ENCODE measurements at regions of chr3 and their contacts with region 1.

Region 1: GRCh38 chr3:48635222-48636021 is at the start of gene SLC26A6:
- DNase-seq: peak; percentile 81 to 98 (median 86)
- ATAC-seq: peak; percentile 98
- H3K4me3 ChIP-seq: peak within 1 kb of the TSS; percentile 76
- H3K4me3 Mint-ChIP-seq: peak within 1 kb of the TSS; percentile 79 to 92 (median 88)
- H3K27ac ChIP-seq: peak within 1 kb of the TSS; percentile 70
- H3K27ac Mint-ChIP-seq: peak within 1 kb of the TSS in 7 of 9 donors; percentile 12 to 84 (median 68)
- H3K4me1 ChIP-seq: peaks cover 0 to 11% of the 10 kb centered on the region in 2 donors
- H3K4me1 Mint-ChIP-seq: peaks cover 4 to 31% (median 22%) of the 10 kb centered on the region in 7 donors
- H3K27me3 ChIP-seq: no peaks in the 10 kb centered on the region
- H3K27me3 Mint-ChIP-seq: no peaks in the 10 kb centered on the region
- total RNA-seq, gene SLC26A6: 15.1 to 37.6 (median 31.2) TPM

Region 2: GRCh38 chr3:48240711-48241491 is 394.5 kb before region 1 on chr3 and contains the start of gene ZNF589:
- CTCF ChIA-PET with region 1: no interaction called
- POLR2A ChIA-PET with region 1: no interaction called
- intact Hi-C with region 1: loop called in 1 of 2 experiments (anchors 1 kb)
- DNase-seq: peak; percentile 87 to 96 (median 92)
- ATAC-seq: peak; percentile 99
- H3K4me3 ChIP-seq: peak within 1 kb of the TSS; percentile 92
- H3K4me3 Mint-ChIP-seq: peak within 1 kb of the TSS; percentile 82 to 94 (median 92)
- H3K27ac ChIP-seq: peak within 1 kb of the TSS; percentile 79
- H3K27ac Mint-ChIP-seq: peak within 1 kb of the TSS; percentile 88 to 96 (median 93)
- H3K4me1 ChIP-seq: peaks cover 7 to 14% of the 10 kb centered on the region in 2 donors
- H3K4me1 Mint-ChIP-seq: peaks cover 5 to 36% (median 25%) of the 10 kb centered on the region in 7 donors
- H3K27me3 ChIP-seq: no peaks in the 10 kb centered on the region
- H3K27me3 Mint-ChIP-seq: no peaks in the 10 kb centered on the region
- total RNA-seq, gene ZNF589: 37.7 to 64.0 (median 40.2) TPM

Region 3: DNA sequence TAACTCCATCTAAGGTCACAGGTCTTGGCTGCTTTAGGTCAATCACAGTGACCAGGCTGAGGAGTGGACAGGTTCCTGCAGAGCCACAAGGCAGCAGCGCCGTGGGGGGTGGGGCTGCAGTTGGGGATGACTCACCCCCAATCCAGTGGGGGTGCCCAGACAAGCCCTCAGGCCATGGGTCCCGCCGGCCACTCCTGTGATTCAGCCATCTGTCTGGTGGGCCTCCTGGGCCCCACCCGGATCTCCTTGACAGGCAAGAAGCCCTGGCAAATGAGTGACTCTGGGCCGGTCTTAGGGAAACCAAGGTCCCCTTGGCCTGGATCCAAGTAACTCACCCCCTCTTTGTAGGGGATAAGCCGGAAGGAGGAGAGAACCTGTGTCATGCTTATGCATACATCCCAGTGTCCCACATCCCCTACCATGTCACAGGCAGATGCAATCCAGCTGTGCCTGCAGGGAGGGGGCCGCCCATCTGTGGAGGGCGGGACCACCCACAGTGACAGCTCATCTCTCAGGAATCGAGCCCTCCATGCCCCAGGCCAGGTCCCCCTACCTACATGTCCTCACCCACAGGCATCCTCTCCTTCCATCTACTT is 39.8 kb before region 1 on chr3:
- CTCF ChIA-PET with region 1: no interaction called
- POLR2A ChIA-PET with region 1: no interaction called
- intact Hi-C with region 1: loop called in 1 of 2 experiments (anchors 5 kb)
- DNase-seq: no peak
- ATAC-seq: peak; percentile 21
- H3K4me3 ChIP-seq: no peak overlapping the region
- H3K4me3 Mint-ChIP-seq: no peak overlapping the region
- H3K27ac ChIP-seq: no peak overlapping the region
- H3K27ac Mint-ChIP-seq: no peak overlapping the region
- H3K4me1 ChIP-seq: no peaks in the 10 kb centered on the region
- H3K4me1 Mint-ChIP-seq: peaks cover 0 to 8% (median 3%) of the 10 kb centered on the region in 7 donors
- H3K27me3 ChIP-seq: peaks cover 0 to 7% of the 10 kb centered on the region in 2 donors
- H3K27me3 Mint-ChIP-seq: peaks cover 6 to 28% (median 16%) of the 10 kb centered on the region in 5 donors

Region 4: DNA sequence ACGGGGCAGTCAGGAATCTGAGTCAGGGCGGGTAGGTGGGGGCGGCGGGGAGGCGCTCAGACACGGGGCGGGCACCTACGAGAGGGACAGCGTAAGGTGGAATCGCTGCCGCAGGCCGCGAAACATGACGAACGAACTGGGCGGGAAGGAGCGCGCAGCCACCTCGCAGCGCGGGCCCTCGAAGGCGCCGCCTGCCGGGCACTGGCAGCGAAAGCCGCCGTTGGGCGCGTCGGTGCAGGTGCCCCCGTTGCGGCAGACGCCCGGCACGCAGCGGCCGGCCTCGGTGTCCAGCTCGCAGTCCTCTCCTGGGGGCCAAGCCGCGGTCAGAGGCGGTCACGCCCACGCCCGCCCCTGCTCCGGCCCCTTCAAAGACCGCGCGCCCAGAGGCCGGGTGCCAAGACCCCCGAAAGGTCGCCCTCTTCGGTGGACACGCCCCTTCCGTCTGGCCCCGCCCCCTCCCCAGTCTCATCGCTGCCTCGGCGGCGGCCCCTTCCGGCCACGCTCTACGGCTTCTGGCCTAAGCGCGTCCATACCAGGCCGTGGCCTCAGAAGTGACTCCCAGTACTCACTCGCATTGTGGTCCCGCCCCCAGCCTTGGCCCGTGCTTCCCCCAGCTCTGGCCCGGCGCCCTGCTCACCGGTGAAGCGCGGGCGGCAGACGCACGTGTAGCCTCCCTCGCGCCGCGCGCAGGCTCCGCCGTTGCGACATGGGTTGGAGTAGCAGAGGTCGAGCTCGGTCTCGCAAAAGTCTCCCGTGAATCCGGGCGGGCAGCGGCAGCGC is 20.8 kb after region 1 on chr3:
- CTCF ChIA-PET with region 1: interaction called, 3 read pairs
- POLR2A ChIA-PET with region 1: interaction called, 8 read pairs
- intact Hi-C with region 1: loop called (anchors 1 kb)
- DNase-seq: peak; percentile 75 to 87 (median 86)
- ATAC-seq: peak; percentile 90
- H3K4me3 ChIP-seq: peak overlapping the region; percentile 70
- H3K4me3 Mint-ChIP-seq: peak overlapping the region; percentile 67 to 86 (median 80)
- H3K27ac ChIP-seq: peak overlapping the region; percentile 65
- H3K27ac Mint-ChIP-seq: peak overlapping the region; percentile 42 to 88 (median 79)
- H3K4me1 ChIP-seq: peaks cover 12 to 14% of the 10 kb centered on the region in 2 donors
- H3K4me1 Mint-ChIP-seq: peaks cover 6 to 23% (median 9%) of the 10 kb centered on the region in 7 donors
- H3K27me3 ChIP-seq: no peaks in the 10 kb centered on the region
- H3K27me3 Mint-ChIP-seq: peaks cover 0 to 15% (median 5%) of the 10 kb centered on the region in 5 donors

Region 5: DNA sequence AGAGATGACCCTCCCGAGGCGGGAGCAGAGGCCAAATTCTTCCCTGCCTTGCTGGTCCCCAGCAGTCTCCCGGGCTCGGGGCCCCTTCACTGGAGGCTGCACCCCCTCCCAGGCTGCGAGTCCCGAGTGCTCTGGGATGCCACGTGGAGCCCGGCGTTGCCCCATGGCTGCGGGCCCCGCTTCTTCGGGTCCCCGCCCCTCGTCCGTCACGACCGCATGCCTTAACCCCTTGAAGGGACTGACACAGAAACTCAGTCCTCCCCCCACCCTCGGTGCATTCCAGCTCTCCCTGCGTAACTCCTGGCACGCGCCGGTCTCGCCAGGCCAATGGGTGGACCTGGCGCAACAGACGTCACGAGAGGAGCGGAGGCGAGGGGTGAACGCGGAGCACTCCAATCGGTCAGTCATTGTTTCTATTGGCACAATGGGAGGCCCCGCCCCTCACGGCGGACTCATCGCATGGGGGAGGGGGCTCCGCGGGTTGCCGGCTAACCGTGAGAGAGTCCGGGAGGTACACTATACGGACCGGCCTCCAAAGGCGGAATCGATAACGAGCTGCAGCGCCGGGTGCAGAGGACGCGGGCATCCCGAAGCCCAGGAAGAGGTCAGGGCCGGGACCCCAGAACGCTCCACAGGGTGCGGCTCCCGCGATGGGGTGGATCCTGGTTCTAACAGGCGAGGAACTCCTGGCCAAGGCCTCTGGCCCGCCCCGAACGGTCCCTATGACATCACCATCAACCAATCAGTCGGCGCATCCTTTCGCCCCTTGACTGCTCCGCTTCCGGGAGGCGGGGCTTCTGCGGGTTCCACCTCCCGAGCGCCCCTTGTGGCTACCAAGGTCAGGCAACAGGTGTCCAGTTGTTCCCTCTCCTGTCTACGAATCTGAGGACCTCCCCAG is 28.2 kb after region 1 on chr3:
- CTCF ChIA-PET with region 1: no interaction called
- POLR2A ChIA-PET with region 1: interaction called, 9 read pairs
- intact Hi-C with region 1: loop called in 1 of 2 experiments (anchors 1 kb)
- DNase-seq: peak; percentile 50 to 94 (median 61)
- ATAC-seq: peak; percentile 88
- H3K4me3 ChIP-seq: peak overlapping the region; percentile 70
- H3K4me3 Mint-ChIP-seq: peak overlapping the region; percentile 34 to 89 (median 70)
- H3K27ac ChIP-seq: no peak overlapping the region
- H3K27ac Mint-ChIP-seq: peak overlapping the region in 1 of 9 donors; percentile 91
- H3K4me1 ChIP-seq: peaks cover 12 to 15% of the 10 kb centered on the region in 2 donors
- H3K4me1 Mint-ChIP-seq: peaks cover 0 to 29% (median 15%) of the 10 kb centered on the region in 7 donors
- H3K27me3 ChIP-seq: peaks cover 0 to 15% of the 10 kb centered on the region in 2 donors
- H3K27me3 Mint-ChIP-seq: peaks cover 4 to 20% (median 13%) of the 10 kb centered on the region in 5 donors

Measured in naive thymus-derived CD4-positive, alpha-beta T cell (primary cell).